Sigmoid colon (tissue), 7 donors: ENCODE measurements at regions of chr5 and their contacts with region 1.

Region 1: GRCh38 chr5:6712577-6713275 is 506 bp upstream of the TENT4A start:
- DNase-seq: peak; percentile 98
- H3K4me3 ChIP-seq: peak overlapping the region; percentile 69 to 78 (median 74)
- H3K27ac ChIP-seq: peak overlapping the region; percentile 92 to 98 (median 97)
- H3K4me1 ChIP-seq: peaks cover 0 to 44% (median 36%) of the 10 kb centered on the region in 4 donors
- H3K27me3 ChIP-seq: no peaks in the 10 kb centered on the region
- CTCF ChIP-seq: no peak
- EP300 ChIP-seq: no peak
- POLR2A ChIP-seq: no peak

Region 2: DNA sequence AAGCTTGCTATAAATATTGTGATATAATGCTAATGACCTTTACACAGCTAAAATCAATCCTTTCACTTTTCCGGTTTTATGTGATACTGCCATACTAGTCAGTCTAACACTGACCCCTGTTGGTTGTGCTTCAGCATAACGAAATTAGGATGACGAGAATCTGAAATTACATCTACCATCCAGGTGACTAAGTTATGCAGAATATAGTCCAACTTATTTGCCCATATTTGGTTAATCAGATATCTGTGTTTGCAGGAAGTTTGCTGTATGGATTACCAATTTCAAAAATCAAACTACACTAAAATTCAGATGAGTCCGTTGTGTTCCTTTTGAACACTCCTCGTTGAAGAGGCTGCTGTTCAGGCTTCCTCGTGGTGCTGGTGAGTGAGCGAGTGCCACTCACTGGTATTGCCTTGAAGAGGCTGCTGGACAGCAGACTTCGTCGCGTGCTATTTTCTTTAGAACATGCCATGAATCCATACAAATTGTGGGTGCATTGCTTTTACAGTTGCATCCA is 33.0 kb after region 1 on chr5:
- intact Hi-C with region 1: loop called (anchors 5 kb)
- DNase-seq: peak; percentile 18
- H3K4me3 ChIP-seq: no peak overlapping the region
- H3K27ac ChIP-seq: peak overlapping the region in 2 of 4 donors; percentile 24 to 61
- H3K4me1 ChIP-seq: peaks cover 0 to 6% (median 4%) of the 10 kb centered on the region in 4 donors
- H3K27me3 ChIP-seq: no peaks in the 10 kb centered on the region
- CTCF ChIP-seq: peak; percentile 53 to 79 (median 76)
- EP300 ChIP-seq: no peak
- POLR2A ChIP-seq: no peak